SK-N-SH (cell line): ENCODE measurements at regions of chr20 and their contacts with region 1.

Region 1: GRCh38 chr20:59222253-59223181 is 58.9 kb downstream of the ZNF831 start:
- DNase-seq: peak; percentile 92
- H3K4me3 ChIP-seq: peak overlapping the region; percentile 47 to 55
- H3K27ac ChIP-seq: peak overlapping the region in 1 of 2 experiments; percentile 64; a peak in 1 of 4 replicates
- H3K4me1 ChIP-seq: peaks cover 0 to 23% of the 10 kb centered on the region in 2 experiments; a peak in 2 of 4 replicates
- H3K27me3 ChIP-seq: peaks cover 7% of the 10 kb centered on the region; the same call in 1 of the 2 replicates
- CTCF ChIP-seq: peak; percentile 97
- EP300 ChIP-seq: 0 out of 4 replicates have a peak, but pooled peaks of 1 of the 2 experiments have one; percentile 7
- RAD21 ChIP-seq: peak; percentile 90

Region 2: DNA sequence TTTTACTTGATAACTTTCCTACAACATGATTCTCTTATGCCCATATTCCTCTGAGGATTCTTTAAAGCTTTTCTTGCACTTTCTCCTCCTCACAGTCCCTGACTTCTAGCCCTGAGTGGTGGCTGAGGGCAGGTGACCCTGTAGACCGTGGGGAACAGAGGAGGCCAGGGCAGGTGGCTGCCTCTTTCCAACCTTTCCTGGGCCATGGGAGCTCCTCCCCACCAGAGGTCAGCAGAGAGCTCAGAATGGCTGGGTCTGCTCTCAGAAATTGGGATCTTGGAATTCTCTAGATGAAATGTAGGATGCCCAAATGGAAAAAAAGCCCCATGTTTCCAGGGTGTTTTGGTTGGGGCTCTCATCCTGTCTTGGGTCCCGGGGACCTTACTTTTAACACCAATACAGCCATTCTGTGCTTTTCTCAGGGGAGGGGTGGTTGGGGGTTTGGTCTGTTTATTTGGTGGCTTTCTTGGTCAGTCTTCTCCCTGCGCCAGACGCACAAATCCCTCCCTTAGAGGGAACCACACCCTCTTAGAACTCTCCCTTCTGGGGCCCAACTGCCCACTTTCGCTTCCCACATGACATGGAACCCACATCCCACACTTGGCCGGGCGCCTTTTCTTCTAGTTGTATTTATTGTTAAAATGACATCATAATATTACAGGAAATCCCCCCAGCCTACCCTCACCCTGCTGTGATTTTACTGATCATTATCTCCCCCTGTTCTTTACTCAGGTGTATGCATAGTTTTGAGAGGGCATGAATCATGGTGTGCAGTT is 352.1 kb before region 1 on chr20:
- CTCF ChIA-PET with region 1: interaction called, 48 read pairs
- POLR2A ChIA-PET with region 1: interaction called, 3 read pairs
- DNase-seq: peak; percentile 80
- H3K4me3 ChIP-seq: peak overlapping the region in 1 of 2 experiments; percentile 19; a peak in 1 of 4 replicates
- H3K27ac ChIP-seq: no peak overlapping the region; a peak in 1 of 4 replicates
- H3K4me1 ChIP-seq: peaks cover 0 to 14% of the 10 kb centered on the region in 2 experiments; a peak in 1 of 4 replicates
- H3K27me3 ChIP-seq: no peaks in the 10 kb centered on the region
- CTCF ChIP-seq: peak; percentile 92
- EP300 ChIP-seq: no peak
- RAD21 ChIP-seq: peak; percentile 96

Region 3: DNA sequence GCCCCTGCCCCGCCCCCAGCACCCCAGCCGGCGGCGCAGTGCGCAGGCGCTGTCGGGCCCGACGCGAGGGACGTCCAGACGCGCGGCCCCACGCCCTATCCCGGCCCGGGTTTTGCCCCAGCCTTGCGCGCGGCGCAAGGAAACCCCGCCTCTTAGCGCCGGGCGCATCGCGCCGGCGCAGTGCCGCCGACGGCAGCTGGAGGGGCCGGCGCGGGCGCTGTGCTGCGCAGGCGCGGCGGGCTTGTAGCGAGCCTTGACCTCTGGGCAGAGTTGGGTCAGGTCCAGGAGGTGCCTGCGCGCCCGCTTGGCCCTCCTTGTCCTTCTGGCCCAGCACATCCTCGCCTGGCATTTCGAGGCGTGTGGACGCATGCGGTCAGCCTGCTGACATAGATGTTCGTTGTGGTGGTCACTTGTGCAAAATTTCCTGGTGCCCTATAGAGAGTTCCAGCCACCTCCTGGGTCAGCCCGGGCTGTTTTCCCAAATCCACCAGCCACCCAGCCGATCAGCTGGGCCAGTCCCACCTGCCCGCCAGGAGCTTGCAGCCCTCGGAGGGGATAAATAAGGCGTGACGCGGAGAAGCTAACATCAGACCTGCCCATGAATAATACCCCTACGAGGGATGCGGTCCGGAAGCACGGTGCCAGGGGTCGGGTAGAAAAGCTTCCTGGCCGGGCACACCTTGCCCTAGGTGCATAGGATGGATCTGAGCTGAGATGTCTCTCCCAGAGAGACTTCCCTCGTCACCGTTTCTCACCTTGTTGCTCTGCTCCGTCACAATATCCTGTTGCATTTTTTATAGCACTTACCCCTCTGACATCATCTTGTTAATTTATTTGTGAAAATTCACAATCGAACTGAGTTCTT is 179.5 kb before region 1 on chr20:
- CTCF ChIA-PET with region 1: interaction called, 20 read pairs
- POLR2A ChIA-PET with region 1: interaction called, 3 read pairs
- DNase-seq: peak; percentile 100
- H3K4me3 ChIP-seq: peak overlapping the region; percentile 75 to 89
- H3K27ac ChIP-seq: peak overlapping the region in 1 of 2 experiments; percentile 89; a peak in 3 of 4 replicates
- H3K4me1 ChIP-seq: peaks cover 7 to 30% of the 10 kb centered on the region in 2 experiments; a peak in 3 of 4 replicates
- H3K27me3 ChIP-seq: no peaks in the 10 kb centered on the region
- CTCF ChIP-seq: no peak
- EP300 ChIP-seq: no peak
- RAD21 ChIP-seq: no peak

Region 4: DNA sequence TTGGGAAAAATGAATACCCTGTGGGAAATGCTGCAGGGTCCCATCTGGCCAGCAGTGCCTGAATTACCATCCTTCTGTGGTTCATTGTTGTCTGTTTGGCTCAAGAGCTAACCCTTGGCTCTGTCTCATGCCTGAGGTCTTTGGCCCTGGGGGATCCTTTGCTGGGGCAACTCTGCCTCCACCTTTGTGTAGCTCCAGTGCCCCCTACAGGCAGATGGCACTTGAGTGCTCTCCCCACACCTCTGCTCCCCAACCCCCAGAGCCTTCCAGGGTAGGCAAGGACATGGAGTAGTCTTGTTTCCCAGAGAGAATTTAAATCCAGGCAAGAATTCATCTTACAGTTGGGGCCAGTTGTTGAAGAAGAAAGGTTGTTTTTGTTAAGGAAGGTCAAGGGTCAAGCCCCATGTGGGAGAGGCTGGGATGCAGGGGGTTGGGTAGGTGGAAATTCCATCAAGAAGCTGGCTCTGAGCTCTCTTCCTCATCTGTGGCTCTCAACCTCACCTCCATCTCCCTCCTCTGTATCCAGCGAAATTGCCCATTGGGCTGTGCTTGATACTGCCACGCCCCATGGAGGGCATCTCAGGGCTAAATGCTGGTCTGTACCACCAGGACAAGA is 14.7 kb before region 1 on chr20:
- CTCF ChIA-PET with region 1: interaction called, 24 read pairs
- POLR2A ChIA-PET with region 1: no interaction called
- DNase-seq: peak; percentile 50
- H3K4me3 ChIP-seq: no peak overlapping the region; a peak in 1 of 4 replicates
- H3K27ac ChIP-seq: no peak overlapping the region
- H3K4me1 ChIP-seq: peaks cover 0 to 4% of the 10 kb centered on the region in 2 experiments; a peak in 1 of 4 replicates
- H3K27me3 ChIP-seq: no peaks in the 10 kb centered on the region; the same call in 1 of the 2 replicates
- CTCF ChIP-seq: peak; percentile 37
- EP300 ChIP-seq: no peak
- RAD21 ChIP-seq: peak; percentile 44

Region 5: DNA sequence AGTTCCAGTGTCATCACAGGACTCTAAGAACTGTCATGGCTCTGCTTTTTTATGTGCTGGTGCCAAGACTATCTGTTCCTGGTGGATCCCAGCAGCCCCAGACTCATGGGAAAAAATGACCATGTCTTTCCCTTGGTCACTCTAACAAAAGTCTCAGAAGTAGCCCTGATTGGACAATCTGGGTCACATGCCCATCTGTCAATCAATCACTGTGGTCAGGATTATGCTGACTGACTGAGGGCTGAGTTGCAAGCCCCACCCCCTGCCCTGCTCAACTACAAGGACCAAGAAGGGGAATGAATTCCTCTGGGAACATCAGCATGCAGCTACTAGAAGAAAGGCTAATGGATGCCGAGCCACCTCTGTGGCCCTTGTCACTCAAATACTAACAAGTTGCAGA is 169.5 kb after region 1 on chr20:
- CTCF ChIA-PET with region 1: interaction called, 25 read pairs
- POLR2A ChIA-PET with region 1: interaction called, 3 read pairs
- DNase-seq: no peak
- H3K4me3 ChIP-seq: no peak overlapping the region
- H3K27ac ChIP-seq: no peak overlapping the region; a peak in 1 of 4 replicates
- H3K4me1 ChIP-seq: peaks cover 0 to 31% of the 10 kb centered on the region in 2 experiments; a peak in 1 of 4 replicates
- H3K27me3 ChIP-seq: no peaks in the 10 kb centered on the region
- CTCF ChIP-seq: no peak
- EP300 ChIP-seq: no peak
- RAD21 ChIP-seq: no peak

Region 6: GRCh38 chr20:59455402-59456341 is 233.2 kb after region 1 on chr20:
- CTCF ChIA-PET with region 1: interaction called, 50 read pairs
- POLR2A ChIA-PET with region 1: no interaction called
- DNase-seq: peak; percentile 77
- H3K4me3 ChIP-seq: peak overlapping the region in 1 of 2 experiments; percentile 48; a peak in 1 of 4 replicates
- H3K27ac ChIP-seq: peak overlapping the region in 1 of 2 experiments; percentile 74; a peak in 2 of 4 replicates
- H3K4me1 ChIP-seq: peaks cover 0 to 24% of the 10 kb centered on the region in 2 experiments; a peak in 1 of 4 replicates
- H3K27me3 ChIP-seq: no peaks in the 10 kb centered on the region
- CTCF ChIP-seq: peak; percentile 81
- EP300 ChIP-seq: no peak
- RAD21 ChIP-seq: peak; percentile 89